Head of caudate nucleus (tissue), 42 donors: ENCODE measurements at regions of chr9 and their contacts with region 1.

Region 1: DNA sequence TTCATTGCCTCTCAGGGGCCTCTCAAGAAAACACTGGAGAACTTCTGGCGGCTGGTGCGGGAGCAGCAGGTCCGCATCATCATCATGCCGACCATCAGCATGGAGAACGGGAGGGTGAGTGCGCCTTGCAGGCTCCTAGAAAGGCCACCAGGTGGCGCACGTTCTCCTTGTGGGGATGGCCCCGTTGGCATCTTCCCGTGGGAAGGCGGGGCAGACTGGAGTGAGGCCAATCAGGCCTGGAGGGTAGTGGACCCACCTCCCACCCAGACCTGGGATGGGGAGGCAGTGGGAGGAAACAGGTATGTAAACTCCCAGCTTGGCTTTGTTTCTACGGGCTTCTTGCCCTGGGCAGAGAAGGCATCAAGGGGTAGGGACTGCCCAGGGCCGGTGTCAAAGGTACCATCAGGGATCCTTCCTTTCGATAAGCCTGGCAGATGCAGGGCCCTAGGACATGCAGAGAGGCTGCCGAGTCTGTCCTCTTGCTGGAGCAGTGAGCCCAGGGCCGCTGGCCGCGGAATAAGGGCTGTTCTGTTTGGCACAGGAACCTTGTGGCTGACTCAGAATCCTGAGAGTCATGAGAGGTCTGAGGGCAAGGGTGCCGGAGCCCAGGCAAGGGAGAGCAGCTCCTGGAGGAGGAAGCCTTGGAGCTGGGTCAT is 18.9 kb upstream of the SPTLC1 start:
- DNase-seq: peak; percentile 68 to 93 (median 85)

Region 2: DNA sequence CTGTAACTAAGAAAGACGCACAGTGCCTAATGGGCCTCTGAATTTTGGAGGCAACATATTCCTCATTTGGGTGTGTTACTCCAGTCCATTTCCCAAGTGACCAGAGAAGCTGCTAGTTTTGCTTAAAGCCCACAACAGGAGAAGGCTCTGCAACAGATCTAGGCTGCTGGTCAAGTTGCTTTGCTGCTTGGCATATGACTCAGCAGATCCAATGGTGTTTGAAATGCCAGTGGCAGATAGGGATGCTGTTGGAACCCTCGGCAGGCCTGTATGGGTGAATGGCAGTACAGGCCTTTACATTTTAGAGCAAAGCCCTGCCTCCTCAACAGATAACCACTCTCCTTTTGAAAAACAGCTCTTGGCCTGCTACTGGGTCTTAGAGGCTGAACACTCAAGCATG is 147.8 kb before region 1 on chr9:
- intact Hi-C with region 1: no loop called
- DNase-seq: no peak

Region 3: DNA sequence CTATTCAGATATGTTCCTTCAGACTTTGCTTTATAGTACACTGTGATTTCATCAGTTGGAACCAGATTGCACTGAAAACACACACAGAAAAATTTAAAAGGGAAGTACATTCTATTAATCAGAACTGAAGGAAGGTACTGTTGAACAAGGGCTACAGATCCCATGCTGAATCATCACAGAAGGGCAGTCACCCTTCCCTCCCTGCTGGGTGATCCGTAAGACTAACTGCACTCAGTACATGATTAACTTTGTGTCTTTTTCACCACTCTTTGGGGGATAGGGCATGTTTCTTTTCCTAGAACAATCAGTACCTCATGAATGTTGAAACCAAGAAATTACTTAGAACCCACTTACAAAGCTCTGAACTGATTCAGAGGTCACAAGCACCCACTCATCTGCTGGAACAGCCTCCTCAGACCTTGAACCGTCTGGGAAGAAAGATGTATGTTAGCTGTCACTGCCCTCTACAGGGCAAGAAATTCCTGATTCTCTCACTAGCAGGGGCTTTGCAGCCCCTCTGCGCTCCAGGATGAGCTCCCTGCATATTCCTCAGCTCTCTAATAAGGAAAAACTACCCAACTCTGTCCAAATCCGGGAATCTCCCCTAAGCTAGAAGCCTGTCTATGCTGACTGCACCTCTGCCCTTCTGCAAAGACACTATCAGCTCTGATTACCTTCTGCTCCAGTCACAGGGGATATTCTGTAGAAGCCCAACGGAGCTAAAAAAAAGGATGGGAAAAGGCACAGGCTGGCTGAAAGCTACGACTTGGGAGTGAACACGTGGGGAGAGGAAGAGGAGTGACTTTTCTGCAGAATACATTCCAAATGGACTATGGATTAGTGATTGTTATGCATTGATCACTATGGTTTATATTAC is 108.4 kb after region 1 on chr9:
- intact Hi-C with region 1: loop called (anchors 10 kb)
- DNase-seq: peak in 29 of 42 donors; percentile 6 to 66 (median 35)

Region 4: DNA sequence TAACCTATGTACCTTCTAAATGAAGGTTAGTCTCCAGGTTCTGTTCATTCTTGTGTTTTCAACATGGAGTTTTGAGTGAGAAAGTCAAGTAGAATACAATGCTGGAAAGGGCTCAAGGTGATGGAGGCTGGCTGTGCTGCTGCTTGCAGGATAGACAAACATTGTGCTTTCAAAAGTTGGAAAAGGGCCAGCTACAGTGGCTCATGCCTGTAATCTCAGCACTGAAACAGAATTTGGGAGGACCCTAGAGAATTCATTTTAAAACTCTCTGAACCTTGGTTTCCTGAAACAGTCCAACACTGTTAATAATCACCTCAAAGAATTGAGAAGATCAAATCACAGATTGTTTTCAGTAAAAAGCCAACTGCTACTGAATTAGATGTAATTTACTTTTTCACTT is 174.8 kb after region 1 on chr9:
- intact Hi-C with region 1: loop called (anchors 10 kb)
- DNase-seq: no peak

Region 5: GRCh38 chr9:92634712-92635605 is 500.9 kb after region 1 on chr9:
- intact Hi-C with region 1: loop called (anchors 5 kb)
- DNase-seq: peak; percentile 56 to 89 (median 81)